ENCODE measurements at regions of chr1 and their contacts with region 1.

Region 1: DNA sequence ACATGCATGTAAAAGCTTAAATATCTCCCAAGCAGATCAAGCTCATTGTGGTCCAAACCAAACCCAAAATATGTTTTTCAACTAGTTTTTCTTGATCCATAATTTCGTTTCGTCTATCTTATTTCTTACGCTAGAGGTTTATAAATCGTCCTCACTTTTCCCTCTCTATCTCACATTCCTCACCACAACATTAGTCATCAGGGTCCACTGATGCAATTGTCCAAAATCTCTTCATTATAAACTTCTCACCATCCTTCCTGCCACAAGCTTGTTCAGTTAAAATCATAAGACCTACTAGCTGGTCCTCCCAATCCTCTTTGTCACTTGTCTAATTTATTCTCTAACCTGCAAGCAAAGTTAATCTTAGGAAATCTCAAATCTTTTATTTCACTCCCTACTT is 173.0 kb upstream of the PALMD start:
- DNase-seq: no peak
- H3K4me3 ChIP-seq: no peak overlapping the region
- H3K27ac ChIP-seq: no peak overlapping the region
- H3K4me1 ChIP-seq: no peaks in the 10 kb centered on the region
- H3K27me3 ChIP-seq: no peaks in the 10 kb centered on the region
- CTCF ChIP-seq: no peak
- POLR2A ChIP-seq: no peak

Region 2: GRCh38 chr1:99149952-99150351 is 322.9 kb before region 1 on chr1:
- intact Hi-C with region 1: no loop called
- DNase-seq: no peak
- H3K4me3 ChIP-seq: no peak overlapping the region
- H3K27ac ChIP-seq: no peak overlapping the region
- H3K4me1 ChIP-seq: no peaks in the 10 kb centered on the region
- H3K27me3 ChIP-seq: no peaks in the 10 kb centered on the region
- CTCF ChIP-seq: no peak
- POLR2A ChIP-seq: no peak

Region 3: DNA sequence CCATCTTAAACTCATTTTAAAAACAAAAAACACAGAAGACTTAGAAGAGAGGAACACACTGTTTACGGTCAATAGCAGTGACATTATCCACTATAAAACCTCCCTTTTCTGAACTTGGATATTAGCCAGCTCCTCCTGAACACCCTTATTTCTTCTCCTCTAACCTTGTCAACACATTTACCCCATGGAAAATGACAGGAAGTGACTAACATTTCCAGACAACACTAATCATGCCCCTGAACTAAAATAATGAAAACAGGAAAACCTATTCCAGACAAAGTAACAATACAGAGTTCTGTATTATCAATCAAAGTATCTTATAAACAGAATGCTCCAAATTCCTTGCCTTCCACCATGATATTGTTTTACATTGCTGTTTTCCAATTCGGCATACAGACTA is 218.3 kb after region 1 on chr1:
- intact Hi-C with region 1: loop called (anchors 10 kb)
- DNase-seq: no peak
- H3K4me3 ChIP-seq: no peak overlapping the region
- H3K27ac ChIP-seq: peak overlapping the region in 1 of 4 donors; percentile 5
- H3K4me1 ChIP-seq: no peaks in the 10 kb centered on the region
- H3K27me3 ChIP-seq: no peaks in the 10 kb centered on the region
- CTCF ChIP-seq: no peak
- POLR2A ChIP-seq: no peak

Measured in esophagus squamous epithelium (tissue), 5 donors.